Right ventricle myocardium inferior (tissue), 1 donor: ENCODE measurements at regions of chr12 and their contacts with region 1.

Region 1: DNA sequence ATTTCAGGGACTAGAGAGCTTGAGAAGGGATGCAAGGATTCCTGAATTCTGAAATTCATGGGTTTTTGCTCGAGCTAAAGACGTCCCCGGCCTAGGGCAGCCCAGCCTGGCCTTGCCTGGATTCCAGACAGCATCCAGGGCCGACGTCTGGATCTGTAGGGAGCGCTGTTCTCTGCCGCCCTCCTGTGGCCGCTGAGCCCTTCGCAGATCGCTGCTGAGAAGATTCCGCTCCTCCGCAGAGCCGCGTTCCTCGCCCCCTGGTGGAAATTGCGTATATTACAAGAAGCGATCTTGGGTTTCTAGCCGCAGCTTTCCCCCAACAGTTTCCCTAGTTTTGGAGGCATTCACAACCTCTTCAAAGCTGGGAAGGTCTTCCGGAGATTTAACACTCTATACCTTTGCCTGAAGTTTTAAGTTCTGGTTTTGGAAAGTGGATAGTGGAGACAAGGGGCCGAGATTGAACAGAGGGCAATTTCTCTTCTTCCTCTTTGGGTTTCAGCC is 5.1 kb downstream of the CISTR start:
- DNase-seq: peak; percentile 96
- ATAC-seq: peak; percentile 90

Region 2: DNA sequence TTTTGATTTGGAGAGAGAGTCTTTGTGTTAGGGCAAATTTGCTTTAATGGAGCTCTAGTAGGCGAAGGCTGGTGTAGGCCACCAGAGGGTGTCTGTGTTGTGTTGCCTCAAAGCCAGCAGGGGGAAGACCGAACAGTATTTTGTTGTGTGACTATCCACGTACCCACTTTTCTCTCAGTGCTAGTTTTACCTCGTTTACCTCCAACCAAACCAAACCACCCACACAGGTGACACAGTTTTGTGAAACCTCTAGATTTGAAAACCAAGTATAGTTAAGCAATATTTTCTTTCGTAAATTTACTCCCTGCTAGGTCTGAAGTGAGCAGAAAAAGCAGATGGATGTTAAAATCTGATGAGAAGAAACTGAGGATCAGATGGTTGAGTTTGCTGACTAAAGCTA is 203.1 kb before region 1 on chr12:
- intact Hi-C with region 1: loop called (anchors 5 kb)
- DNase-seq: no peak
- ATAC-seq: peak; percentile 87

Region 3: DNA sequence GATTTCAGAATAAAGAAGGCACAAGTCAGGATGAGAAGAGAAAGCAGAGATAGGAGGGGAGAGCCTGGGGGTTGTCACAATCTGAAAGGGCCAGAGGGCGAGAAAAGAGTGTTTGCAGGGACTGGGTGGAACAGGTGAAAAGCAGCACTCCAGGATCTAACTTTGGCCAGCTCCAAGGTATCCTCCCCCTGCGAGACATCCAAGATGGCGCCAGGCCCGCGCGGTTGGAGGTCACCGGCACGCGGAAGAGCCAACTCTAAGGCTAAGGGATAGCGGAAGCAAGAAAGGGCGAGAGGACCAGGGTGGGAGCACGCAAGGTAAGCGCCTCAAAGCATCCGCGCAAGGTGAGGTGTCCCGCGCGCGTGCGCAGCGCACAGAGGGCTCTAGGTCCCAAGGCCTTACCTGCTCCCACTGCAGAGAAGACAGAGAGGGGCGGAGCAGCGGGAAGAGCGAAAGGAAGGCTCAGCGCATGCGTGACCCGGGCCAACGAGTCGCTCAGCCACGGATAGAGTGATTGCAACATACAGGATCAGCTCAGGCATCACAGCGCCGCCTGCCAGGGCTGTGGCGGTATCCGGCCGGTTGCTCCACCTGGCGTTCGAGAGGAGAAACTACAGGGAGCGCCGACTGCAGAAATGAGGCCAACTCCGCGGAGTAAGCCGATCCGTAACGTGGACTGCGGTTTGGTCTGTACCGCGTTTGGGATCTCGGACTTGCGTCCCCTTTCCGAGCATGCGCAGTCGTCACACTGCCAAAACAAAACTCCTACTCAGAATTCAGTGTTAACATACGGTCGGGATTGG is 70.8 kb before region 1 on chr12 and contains the start of gene ATP5MC2:
- intact Hi-C with region 1: no loop called
- DNase-seq: peak; percentile 99
- ATAC-seq: peak; percentile 96
- total RNA-seq, gene ATP5MC2: 600 TPM

Region 4: DNA sequence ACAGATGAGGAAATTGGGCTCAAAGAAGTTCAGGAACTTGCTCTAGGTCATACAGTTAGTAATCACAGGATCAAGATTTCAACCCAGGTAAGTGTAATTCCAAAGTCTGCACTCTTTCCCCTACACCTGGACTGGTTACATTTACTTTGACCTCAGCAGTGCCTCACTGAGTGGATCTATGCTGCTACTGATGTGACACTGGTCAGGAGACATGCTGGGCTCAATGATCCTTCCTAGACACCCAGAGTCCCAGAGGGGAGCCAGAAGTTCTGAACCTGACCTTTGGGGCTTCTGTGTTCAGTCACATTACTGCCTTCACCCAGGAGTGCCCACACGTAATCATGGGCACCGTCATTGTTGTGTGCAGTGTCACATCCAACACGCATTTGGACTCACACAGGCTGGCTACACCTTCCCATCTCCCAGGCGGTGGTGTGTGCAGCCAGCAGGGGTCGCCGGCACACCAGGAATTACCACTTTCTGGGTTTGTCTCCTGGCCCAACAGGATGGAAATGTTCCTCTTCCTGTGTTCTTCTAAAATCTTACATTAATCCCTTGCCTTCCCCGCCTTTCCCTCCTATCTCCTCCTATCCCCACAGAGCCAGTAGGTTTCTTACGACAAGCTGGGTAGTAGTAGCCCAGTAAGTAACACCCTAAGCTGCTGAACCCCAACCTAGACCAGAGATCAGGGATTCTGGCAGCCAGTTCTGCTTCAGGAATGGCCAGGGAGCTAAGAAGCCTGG is 45.0 kb before region 1 on chr12:
- intact Hi-C with region 1: loop called (anchors 1 kb)
- DNase-seq: peak; percentile 88
- ATAC-seq: peak; percentile 91

Region 5: DNA sequence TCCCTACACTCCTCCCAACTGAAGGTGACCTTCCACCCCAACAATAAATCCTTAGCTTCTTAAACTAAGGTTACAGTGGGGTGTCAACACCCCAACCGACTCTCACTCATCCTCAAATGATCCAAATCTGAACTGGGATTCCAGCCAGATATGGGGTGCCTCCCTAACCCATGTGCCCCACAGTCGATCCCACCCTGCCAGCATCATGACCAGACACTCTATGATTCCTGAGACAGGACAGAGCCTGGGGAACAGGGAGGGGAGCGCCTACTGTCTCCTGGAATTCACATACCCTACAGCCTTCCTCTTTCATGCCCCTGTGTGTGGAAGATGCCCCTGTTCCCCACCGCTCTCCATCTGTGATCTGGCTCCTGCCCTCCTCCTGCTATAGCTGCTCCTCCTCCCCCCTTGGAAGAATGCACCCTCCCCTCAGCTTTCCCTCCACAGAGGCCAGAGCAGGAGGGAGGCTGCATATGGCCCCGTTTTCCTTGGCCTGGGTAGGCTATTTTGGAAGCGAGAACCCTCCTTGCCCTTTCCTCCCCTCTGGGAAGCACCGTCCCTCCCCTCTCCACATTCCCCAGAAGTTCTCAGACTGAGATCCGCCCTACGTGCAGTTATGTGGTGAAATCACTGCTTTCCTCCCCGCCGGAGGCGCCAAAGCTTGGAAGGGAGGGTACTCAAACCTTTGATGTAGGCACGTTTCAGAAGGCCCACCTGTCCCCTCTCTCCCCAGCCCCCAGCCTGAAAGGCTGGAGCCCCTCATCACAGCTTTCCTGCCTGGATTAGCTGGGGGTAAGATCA is 394.1 kb after region 1 on chr12:
- intact Hi-C with region 1: no loop called
- DNase-seq: no peak
- ATAC-seq: peak; percentile 68

Region 6: DNA sequence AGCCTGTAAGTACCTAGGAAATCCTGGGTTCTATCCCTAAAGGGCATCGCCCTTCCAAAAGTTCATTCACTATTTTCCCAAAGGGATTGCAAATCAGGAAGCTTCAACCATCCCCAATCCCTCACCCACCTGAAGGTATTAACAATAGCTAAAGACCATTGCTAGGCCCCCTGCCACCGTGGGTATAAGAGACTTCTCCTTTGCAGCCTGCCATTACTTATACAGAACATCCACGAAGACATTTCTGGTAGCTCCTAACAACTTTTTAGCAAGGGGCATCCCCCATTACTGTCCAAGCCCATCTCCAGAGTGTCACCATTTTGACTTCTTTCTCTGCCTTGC is 442.5 kb after region 1 on chr12:
- intact Hi-C with region 1: loop called (anchors 5 kb)
- DNase-seq: no peak
- ATAC-seq: no peak